Endothelial cell of umbilical vein (primary cell): ENCODE measurements at regions of chr15 and their contacts with region 1.

Region 1: DNA sequence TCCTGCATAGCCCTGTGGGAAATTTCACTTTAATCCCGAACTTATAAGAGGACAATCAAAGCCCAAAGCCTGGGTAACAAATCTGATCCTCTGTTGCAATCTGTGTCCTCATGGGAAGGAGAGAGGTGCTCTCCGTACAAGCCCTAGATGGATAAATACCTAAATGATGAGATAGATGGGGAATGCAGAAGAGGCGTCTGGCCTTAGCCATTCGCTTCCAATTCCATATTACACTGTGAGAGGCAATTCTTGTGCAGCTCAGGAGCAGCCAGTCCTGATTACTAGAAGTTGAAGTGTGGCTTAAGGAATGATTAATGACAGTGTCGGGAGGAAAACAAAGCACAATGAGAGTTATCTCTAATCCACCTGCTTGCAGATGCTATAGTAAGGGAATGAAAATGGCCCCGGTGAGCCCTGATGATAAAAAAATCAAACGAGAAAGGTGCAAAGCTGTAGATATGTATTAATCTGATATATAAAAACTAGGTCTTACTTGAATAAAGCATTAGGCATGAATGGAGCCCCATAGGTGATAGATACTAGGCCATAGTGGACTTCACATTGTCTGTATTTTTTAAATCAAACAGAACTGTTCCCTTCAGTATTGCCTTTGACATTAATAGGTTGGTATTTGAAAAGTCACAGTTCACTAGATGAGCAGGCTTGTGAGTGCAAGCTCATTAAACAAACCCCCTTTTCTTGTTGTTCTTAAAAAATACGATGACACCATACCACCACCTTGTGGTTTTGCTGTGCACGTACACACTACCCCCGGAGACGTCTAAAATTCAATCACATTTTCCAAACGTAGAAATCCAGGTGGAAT is 54.2 kb upstream of the TMCO5A start:
- DNase-seq: peak; percentile 64
- H3K4me3 ChIP-seq: no peak overlapping the region
- H3K27ac ChIP-seq: no peak overlapping the region
- H3K4me1 ChIP-seq: no peaks in the 10 kb centered on the region
- H3K27me3 ChIP-seq: peaks cover 20 to 73% of the 10 kb centered on the region in 2 experiments
- CTCF ChIP-seq: peak; percentile 54 to 61
- POLR2A ChIP-seq: no peak

Region 2: GRCh38 chr15:36579792-36580431 is 1300.3 kb before region 1 on chr15:
- CTCF ChIA-PET with region 1: no interaction called
- POLR2A ChIA-PET with region 1: no interaction called
- dilution Hi-C with region 1: no loop called
- intact Hi-C with region 1: loop called (anchors 5 kb)
- DNase-seq: no peak
- H3K4me3 ChIP-seq: peak overlapping the region; percentile 24 to 87 (median 72)
- H3K27ac ChIP-seq: peak overlapping the region; percentile 92
- H3K4me1 ChIP-seq: peaks cover 10% of the 10 kb centered on the region
- H3K27me3 ChIP-seq: no peaks in the 10 kb centered on the region
- CTCF ChIP-seq: no peak
- POLR2A ChIP-seq: no peak

Region 3: DNA sequence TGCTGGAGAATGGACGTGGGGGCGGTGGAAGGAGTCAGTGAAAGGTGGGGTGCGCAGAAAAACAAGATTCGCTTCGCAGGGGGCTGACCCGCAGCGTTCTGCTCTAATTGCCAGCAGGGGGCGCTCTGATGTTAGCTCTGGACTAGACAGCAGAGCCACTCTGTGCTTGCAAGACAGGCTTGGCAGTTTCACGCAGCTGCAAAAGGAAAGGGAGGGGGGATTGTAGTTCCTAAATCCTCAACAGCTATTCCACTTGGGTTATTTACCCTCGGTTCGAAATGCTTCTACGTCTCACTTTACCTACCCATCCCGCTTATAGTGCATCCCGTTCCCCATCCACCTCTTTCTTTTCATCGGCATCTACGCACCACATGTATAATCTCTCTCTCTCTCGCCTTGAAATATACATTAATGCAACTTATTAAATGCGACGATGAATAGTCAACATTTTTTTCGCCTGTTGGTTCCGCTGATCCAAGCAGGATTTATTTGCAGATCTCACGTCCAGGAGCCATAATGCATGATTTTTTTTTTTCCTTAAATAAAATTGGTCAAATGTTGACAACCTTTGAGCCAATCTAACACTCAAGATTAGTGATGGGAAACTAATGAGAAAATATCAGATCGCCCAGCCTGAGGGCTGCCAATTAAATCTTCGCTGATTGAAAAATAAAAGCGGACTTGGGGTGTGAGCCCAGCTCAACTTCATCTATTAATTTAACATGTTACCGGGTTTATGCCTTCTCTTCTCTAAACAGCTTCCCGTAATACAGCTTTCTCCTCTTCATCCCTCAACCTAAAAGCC is 996.3 kb before region 1 on chr15:
- CTCF ChIA-PET with region 1: interaction called, 10 read pairs
- POLR2A ChIA-PET with region 1: no interaction called
- dilution Hi-C with region 1: no loop called
- intact Hi-C with region 1: loop called (anchors 1 kb)
- DNase-seq: peak; percentile 79
- H3K4me3 ChIP-seq: no peak overlapping the region
- H3K27ac ChIP-seq: no peak overlapping the region
- H3K4me1 ChIP-seq: peaks cover 11% of the 10 kb centered on the region
- H3K27me3 ChIP-seq: peaks cover 90 to 99% of the 10 kb centered on the region in 2 experiments
- CTCF ChIP-seq: peak; percentile 72 to 91
- POLR2A ChIP-seq: no peak

Region 4: GRCh38 chr15:37682304-37682703 is 197.9 kb before region 1 on chr15:
- CTCF ChIA-PET with region 1: no interaction called
- POLR2A ChIA-PET with region 1: no interaction called
- dilution Hi-C with region 1: no loop called
- intact Hi-C with region 1: loop called (anchors 5 kb)
- DNase-seq: peak; percentile 1
- H3K4me3 ChIP-seq: no peak overlapping the region
- H3K27ac ChIP-seq: no peak overlapping the region
- H3K4me1 ChIP-seq: no peaks in the 10 kb centered on the region
- H3K27me3 ChIP-seq: no peaks in the 10 kb centered on the region
- CTCF ChIP-seq: no peak
- POLR2A ChIP-seq: no peak

Region 5: DNA sequence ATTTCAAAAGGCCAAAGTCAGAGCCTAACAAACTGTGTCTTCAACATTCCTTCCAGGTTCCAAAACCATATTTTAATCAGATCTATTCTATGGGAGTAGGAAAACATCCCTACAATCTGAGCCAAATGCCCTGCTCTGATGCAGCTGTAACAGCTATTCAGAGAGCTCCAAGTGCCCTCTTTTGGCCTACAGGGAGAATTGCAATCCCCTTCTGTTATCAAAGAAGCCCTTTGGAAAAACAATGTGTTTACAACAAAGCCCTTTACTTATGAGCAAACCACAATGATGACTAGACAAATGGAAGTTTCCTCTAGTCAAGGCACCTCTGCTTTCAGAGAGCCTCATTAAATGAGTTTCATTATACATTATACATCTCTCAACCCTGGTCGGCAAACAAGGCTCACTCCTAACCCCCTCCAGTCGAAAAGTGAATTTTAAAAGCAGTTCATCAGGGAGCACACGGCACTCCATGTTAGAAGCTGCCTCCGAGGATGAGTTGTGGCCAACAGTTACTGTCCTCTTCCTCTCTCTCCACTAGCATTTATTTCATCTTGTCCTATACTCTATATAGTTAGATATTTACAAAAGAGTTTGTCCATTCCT is 11.6 kb after region 1 on chr15:
- CTCF ChIA-PET with region 1: interaction called, 55 read pairs
- POLR2A ChIA-PET with region 1: no interaction called
- dilution Hi-C with region 1: no loop called
- intact Hi-C with region 1: no loop called
- DNase-seq: peak; percentile 46
- H3K4me3 ChIP-seq: no peak overlapping the region
- H3K27ac ChIP-seq: no peak overlapping the region
- H3K4me1 ChIP-seq: peaks cover 3% of the 10 kb centered on the region
- H3K27me3 ChIP-seq: peaks cover 8 to 53% of the 10 kb centered on the region in 2 experiments
- CTCF ChIP-seq: peak; percentile 62 to 71
- POLR2A ChIP-seq: no peak

Region 6: GRCh38 chr15:38103564-38103963 is 223.3 kb after region 1 on chr15:
- CTCF ChIA-PET with region 1: no interaction called
- POLR2A ChIA-PET with region 1: no interaction called
- dilution Hi-C with region 1: no loop called
- intact Hi-C with region 1: no loop called
- DNase-seq: no peak
- H3K4me3 ChIP-seq: no peak overlapping the region
- H3K27ac ChIP-seq: no peak overlapping the region
- H3K4me1 ChIP-seq: no peaks in the 10 kb centered on the region
- H3K27me3 ChIP-seq: peaks cover 2 to 16% of the 10 kb centered on the region in 2 experiments
- CTCF ChIP-seq: no peak
- POLR2A ChIP-seq: no peak